HEK293T (cell line): ENCODE measurements at regions of chr2 and their contacts with region 1.

Region 1: DNA sequence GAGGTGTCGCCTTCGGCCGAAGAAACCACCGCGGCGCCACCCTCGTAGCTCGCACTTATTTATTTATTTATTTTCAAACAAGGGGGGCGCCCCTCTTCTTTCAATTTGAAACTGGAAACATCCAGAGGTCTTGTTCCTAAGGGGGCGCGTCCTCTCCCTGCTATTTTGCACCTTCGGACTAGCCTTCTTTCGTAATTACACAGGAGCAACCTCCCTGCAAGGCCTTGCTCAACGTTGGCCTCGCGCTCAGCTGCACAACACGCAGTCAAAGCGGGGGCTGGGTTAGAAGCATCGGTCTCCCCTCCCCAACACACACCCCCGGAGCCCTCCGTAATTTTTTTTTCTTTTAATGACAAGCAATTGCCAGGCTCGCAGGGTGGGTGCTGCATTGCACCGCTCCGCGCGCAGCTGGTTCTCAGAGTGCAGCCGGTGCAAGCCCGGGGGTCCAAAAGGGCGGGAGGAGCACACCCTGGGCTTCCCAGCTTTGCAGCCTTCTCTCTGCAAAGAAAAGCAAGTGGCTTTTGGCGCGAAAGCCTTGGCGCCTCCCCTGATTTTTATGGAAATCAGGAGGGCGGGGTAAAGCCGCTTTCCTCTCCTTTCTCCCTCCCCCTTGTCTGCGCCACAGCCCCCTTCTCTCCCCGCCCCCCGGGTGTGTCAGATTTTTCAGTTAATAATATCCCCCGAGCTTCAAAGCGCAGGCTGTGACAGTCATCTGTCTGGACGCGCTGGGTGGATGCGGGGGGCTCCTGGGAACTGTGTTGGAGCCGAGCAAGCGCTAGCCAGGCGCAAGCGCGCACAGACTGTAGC is at the start of gene MYCN:
- DNase-seq: peak; percentile 52

Region 2: DNA sequence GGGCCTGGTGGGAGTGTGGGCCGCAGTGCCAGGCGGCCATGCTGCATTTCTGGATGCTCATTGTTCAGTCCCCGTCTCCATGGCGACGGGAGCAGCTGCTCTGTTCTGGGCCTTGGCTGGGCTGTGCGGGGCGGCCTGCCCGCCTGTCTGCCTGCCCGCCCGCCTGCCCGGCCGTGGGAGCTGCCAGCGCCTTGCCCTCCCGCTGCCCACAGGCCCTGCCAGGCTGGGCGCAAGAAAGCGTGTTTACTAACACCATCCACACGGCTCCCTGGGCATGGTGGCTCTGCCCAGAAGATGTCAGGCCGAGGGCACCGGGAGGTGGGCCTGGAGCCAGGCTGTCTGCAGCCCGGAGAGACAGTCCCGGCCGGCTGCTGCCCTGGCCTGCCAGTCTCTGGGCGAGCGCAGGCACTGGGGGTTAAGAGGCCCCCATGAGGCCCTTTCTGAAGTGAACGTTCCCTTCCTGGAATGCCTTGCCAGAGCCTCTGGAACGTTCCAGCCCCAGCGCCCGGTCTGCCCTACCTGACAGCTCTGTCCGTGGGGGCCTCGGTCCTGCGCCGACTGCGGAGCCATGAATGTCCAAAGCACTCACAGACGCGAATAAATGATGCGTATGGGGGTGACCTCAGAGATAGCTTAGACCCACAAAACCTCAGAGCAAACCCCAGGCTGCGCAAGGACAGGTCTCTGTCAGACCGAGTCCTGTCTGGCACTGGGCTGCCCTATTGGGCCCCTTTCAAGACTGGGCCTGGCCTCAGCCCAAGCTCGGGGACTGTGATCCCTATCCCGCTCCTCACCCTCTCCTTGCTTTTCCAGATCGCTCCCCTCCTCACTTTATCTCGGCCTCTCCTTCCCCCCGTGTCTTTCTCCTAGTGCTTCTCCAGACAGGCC is 44.6 kb after region 1 on chr2:
- CTCF ChIA-PET with region 1: no interaction called
- POLR2A ChIA-PET with region 1: no interaction called
- DNase-seq: no peak

Region 3: GRCh38 chr2:16281451-16282336 is 341.6 kb after region 1 on chr2:
- CTCF ChIA-PET with region 1: interaction called, 13 read pairs
- POLR2A ChIA-PET with region 1: no interaction called
- DNase-seq: peak; percentile 52